ENCODE measurements at regions of chr12 and their contacts with region 1.

Region 1: DNA sequence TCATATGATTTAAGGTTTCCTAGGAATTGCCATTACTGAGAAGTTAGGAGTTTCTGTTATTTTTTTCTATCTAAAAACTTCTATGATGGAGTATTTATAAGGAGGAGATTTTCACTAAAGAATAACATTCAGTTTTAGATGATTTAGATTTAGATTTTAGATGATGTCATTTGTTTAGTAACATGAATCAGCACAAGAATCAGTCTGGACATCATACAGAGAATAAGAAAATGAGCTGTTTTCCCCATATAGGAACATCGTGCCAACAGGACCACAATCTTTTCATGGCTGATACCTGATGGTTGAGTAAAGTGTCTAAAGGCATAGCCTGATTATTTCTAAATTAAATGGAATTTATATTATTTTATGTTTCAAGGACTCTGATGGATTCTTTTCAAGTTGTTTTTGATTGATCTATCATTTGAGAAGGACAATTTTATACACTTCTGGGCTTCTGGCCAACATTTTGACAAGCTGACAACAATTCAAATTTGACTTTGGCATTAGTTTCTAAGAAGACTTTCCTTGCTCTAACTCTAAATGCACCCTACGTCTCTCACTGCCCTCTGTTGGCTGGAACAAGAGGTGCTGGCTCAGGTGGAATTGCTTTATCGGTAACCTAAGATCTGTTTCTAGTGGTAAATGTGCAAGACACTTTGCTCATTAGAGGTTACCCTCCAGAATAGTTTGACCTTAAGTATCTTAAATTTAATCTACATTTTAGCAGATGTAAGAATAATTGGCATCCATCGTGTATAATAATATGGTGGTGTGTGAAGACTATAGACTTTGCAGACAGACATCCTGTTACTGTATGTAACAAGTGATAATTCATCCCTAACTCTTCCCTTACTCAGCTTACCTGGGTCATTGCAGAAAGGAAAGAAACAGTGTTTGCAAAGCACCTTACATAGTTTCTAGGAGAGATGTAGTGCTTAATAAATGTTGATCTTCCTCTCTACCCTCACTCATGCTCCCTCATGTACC is 42.8 kb upstream of the CPSF6 start:
- DNase-seq: peak; percentile 17
- ATAC-seq: no peak
- H3K4me3 ChIP-seq: no peak overlapping the region
- H3K27ac ChIP-seq: no peak overlapping the region
- H3K4me1 ChIP-seq: no peaks in the 10 kb centered on the region
- H3K27me3 ChIP-seq: no peaks in the 10 kb centered on the region
- CTCF ChIP-seq: peak; percentile 52; the same call in 1 of the 2 replicates

Region 2: GRCh38 chr12:68641138-68641537 is 555.5 kb before region 1 on chr12:
- CTCF ChIA-PET with region 1: no interaction called
- POLR2A ChIA-PET with region 1: no interaction called
- in situ Hi-C with region 1: no loop called
- intact Hi-C with region 1: no loop called
- DNase-seq: no peak
- ATAC-seq: peak; percentile 69
- H3K4me3 ChIP-seq: no peak overlapping the region
- H3K27ac ChIP-seq: peak overlapping the region; percentile 5
- H3K4me1 ChIP-seq: peaks cover 70% of the 10 kb centered on the region
- H3K27me3 ChIP-seq: no peaks in the 10 kb centered on the region
- CTCF ChIP-seq: no peak

Region 3: DNA sequence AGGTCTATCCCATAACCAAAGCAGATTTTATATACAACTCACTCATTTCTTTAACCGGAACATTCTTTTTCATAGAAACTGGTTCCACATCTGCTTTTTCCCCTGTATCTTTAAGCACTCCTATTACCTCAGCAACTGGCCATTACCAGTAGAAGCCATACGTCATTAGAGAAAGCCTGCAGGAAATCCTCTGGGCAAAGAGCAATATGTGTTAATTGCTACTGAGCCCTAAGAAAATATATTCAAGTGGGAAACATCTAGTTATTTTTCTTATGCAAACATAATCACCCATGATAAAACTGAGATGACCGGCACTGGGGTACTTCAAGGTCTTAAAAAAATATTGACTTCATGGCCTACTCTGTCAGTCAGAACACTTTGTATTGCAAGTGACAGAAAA is 14.6 kb after region 1 on chr12:
- CTCF ChIA-PET with region 1: interaction called, 3 read pairs
- POLR2A ChIA-PET with region 1: interaction called, 15 read pairs
- in situ Hi-C with region 1: no loop called
- intact Hi-C with region 1: no loop called
- DNase-seq: no peak
- ATAC-seq: no peak
- H3K4me3 ChIP-seq: no peak overlapping the region
- H3K27ac ChIP-seq: no peak overlapping the region
- H3K4me1 ChIP-seq: no peaks in the 10 kb centered on the region
- H3K27me3 ChIP-seq: no peaks in the 10 kb centered on the region
- CTCF ChIP-seq: no peak